ENCODE measurements at regions of chr5 and their contacts with region 1.

Region 1: GRCh38 chr5:63401436-63402046 is 560.7 kb downstream of the HTR1A start:
- DNase-seq: peak; percentile 13 to 57 (median 30)
- ATAC-seq: peak; percentile 72
- H3K4me3 ChIP-seq: no peak overlapping the region
- H3K27ac ChIP-seq: no peak overlapping the region
- H3K4me1 ChIP-seq: no peaks in the 10 kb centered on the region
- H3K27me3 ChIP-seq: no peaks in the 10 kb centered on the region
- CTCF ChIP-seq: peak; percentile 47 to 51 (median 50)
- EP300 ChIP-seq: no peak
- POLR2A ChIP-seq: no peak
- RAD21 ChIP-seq: peak; percentile 57 to 73

Region 2: DNA sequence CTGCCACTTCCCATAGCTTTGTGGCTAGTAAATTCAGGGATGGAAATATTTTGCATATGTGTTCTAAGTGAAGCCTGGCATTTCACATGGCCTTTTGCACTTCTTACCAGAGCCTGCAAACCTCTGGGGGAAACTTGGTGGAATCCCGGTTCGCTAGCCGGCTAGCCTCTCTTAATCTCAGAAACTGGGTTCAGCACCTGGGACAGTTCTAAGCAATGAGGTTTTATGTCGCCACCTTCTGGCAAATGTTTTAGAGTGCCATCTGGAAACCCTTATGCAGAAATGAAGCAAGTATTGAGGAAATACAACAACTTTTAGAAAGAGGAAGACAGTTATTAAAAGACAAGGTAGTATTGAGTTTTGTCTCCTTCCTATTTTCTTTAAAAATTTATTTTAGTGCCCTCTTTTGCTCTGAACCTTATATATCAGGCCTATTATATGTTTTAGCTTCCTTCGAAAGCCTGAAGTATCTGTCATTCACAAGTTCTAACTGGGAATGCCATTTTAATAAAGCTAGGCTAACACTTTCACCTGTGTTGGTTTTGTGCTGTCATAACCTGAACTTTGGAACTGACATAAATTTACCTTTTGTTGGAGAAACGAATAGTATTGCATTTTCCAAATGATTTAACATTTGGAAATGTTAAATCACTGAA is 561.7 kb after region 1 on chr5:
- CTCF ChIA-PET with region 1: no interaction called
- POLR2A ChIA-PET with region 1: no interaction called
- in situ Hi-C with region 1: no loop called
- intact Hi-C with region 1: loop called (anchors 1 kb)
- DNase-seq: peak; percentile 28 to 64 (median 36)
- ATAC-seq: peak; percentile 72; the same call in 2 of the 3 replicates
- H3K4me3 ChIP-seq: no peak overlapping the region
- H3K27ac ChIP-seq: no peak overlapping the region
- H3K4me1 ChIP-seq: no peaks in the 10 kb centered on the region
- H3K27me3 ChIP-seq: no peaks in the 10 kb centered on the region
- CTCF ChIP-seq: peak; percentile 55 to 62 (median 60); a peak in 5 of 6 replicates
- EP300 ChIP-seq: no peak
- POLR2A ChIP-seq: no peak
- RAD21 ChIP-seq: peak; percentile 49 to 74